Panc1 (cell line): ENCODE measurements at regions of chr12 and their contacts with region 1.

Region 1: GRCh38 chr12:10771132-10771733 is 31.2 kb downstream of the TAS2R7 start:
- DNase-seq: peak; percentile 17
- ATAC-seq: no peak
- H3K4me3 ChIP-seq: no peak overlapping the region
- H3K27ac ChIP-seq: no peak overlapping the region
- H3K4me1 ChIP-seq: no peaks in the 10 kb centered on the region
- H3K27me3 ChIP-seq: peaks cover 18% of the 10 kb centered on the region
- CTCF ChIP-seq: peak; percentile 37; the same call in 1 of the 2 replicates

Region 2: DNA sequence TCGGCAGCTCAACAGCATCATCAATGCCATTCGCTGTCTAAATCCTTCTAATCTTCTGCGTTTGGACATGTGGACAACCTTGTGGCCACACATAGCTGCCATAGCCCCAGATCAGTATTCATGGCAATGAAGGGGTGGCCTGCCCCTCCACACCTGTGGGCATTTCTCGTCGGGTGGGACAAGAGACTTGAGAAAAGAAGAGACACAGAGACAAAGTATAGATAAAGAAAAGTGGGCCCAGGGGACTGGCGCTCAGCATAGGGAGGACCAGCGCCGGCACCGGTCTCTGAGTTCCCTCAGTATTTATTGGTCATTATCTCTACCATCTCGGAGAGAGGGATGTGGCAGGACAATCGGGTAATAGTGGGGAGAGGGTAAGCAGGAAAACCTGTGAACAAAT is 200.1 kb before region 1 on chr12:
- CTCF ChIA-PET with region 1: no interaction called
- POLR2A ChIA-PET with region 1: no interaction called
- in situ Hi-C with region 1: no loop called
- intact Hi-C with region 1: no loop called
- DNase-seq: no peak
- ATAC-seq: no peak
- H3K4me3 ChIP-seq: no peak overlapping the region
- H3K27ac ChIP-seq: no peak overlapping the region
- H3K4me1 ChIP-seq: no peaks in the 10 kb centered on the region
- H3K27me3 ChIP-seq: no peaks in the 10 kb centered on the region
- CTCF ChIP-seq: no peak

Region 3: DNA sequence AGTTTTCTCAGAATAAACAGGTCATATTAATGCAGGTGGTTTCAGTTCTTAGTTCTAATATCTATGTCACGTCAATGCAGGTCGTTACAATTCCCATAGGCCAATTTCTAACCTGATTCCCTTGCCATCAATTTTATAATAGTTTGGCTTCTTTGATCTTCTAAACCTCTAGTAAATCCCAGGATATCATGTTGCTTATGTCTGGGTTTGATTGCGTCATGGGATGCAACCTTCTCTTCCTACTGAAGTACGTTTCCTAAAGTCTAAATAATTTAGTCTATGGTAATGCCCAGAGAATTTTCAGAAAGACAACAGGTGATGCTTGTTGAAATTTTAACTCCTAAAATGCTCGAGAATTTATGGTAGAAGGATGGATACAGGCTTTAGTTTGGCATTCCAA is 12.0 kb after region 1 on chr12:
- CTCF ChIA-PET with region 1: no interaction called
- POLR2A ChIA-PET with region 1: no interaction called
- in situ Hi-C with region 1: no loop called
- intact Hi-C with region 1: no loop called
- DNase-seq: no peak
- ATAC-seq: no peak
- H3K4me3 ChIP-seq: no peak overlapping the region
- H3K27ac ChIP-seq: no peak overlapping the region
- H3K4me1 ChIP-seq: no peaks in the 10 kb centered on the region
- H3K27me3 ChIP-seq: no peaks in the 10 kb centered on the region
- CTCF ChIP-seq: no peak

Region 4: GRCh38 chr12:10873378-10873777 is 102.1 kb after region 1 on chr12:
- CTCF ChIA-PET with region 1: no interaction called
- POLR2A ChIA-PET with region 1: no interaction called
- in situ Hi-C with region 1: no loop called
- intact Hi-C with region 1: no loop called
- DNase-seq: no peak
- ATAC-seq: no peak
- H3K4me3 ChIP-seq: no peak overlapping the region
- H3K27ac ChIP-seq: no peak overlapping the region
- H3K4me1 ChIP-seq: no peaks in the 10 kb centered on the region
- H3K27me3 ChIP-seq: no peaks in the 10 kb centered on the region
- CTCF ChIP-seq: no peak

Region 5: DNA sequence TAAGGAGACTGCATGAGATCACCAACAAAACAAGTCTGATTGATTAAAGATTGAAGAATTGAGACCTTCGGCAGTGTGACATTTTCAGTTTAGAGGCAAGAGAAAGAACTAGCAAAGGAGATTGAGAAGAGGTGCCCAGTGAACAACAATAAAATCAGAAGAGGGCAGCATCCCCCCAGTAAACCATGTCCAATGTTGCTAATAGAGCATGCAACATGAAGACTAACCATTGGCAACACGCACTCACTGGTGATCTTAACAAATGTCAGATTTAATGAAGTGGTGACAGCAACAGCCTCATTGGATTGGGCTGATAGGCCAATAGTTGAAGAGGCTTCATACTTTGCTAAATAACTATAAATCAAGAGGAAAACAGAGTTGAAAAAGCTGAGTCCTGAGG is 188.6 kb after region 1 on chr12:
- CTCF ChIA-PET with region 1: no interaction called
- POLR2A ChIA-PET with region 1: no interaction called
- in situ Hi-C with region 1: no loop called
- intact Hi-C with region 1: no loop called
- DNase-seq: no peak
- ATAC-seq: no peak
- H3K4me3 ChIP-seq: no peak overlapping the region
- H3K27ac ChIP-seq: no peak overlapping the region
- H3K4me1 ChIP-seq: no peaks in the 10 kb centered on the region
- H3K27me3 ChIP-seq: no peaks in the 10 kb centered on the region
- CTCF ChIP-seq: 0 out of 2 replicates have a peak, but pooled peaks have one; percentile 5

Region 6: DNA sequence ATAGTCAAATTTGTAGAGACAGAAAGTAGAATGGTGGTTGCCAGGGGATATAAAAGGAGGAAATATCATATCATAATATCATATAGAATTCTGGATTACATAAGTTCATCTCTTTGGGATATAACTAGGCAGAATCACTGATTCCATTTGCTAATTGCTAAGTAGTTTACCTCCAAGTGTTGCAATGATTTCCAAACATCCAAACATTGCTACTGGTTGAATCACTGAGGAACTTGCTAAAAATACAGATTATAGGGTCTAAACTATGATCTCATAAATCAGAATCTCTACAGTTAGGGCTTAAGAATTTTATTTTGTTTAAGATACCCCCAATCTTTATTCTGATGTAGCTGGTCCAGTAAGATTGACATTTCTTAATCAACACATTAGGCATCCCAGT is 431.6 kb after region 1 on chr12:
- CTCF ChIA-PET with region 1: interaction called, 6 read pairs
- POLR2A ChIA-PET with region 1: no interaction called
- in situ Hi-C with region 1: no loop called
- intact Hi-C with region 1: loop called (anchors 5 kb)
- DNase-seq: no peak
- ATAC-seq: no peak
- H3K4me3 ChIP-seq: no peak overlapping the region
- H3K27ac ChIP-seq: no peak overlapping the region
- H3K4me1 ChIP-seq: no peaks in the 10 kb centered on the region
- H3K27me3 ChIP-seq: no peaks in the 10 kb centered on the region
- CTCF ChIP-seq: no peak

Region 7: GRCh38 chr12:11486623-11487444 is 715.6 kb after region 1 on chr12:
- CTCF ChIA-PET with region 1: interaction called, 6 read pairs
- POLR2A ChIA-PET with region 1: no interaction called
- in situ Hi-C with region 1: no loop called
- intact Hi-C with region 1: loop called (anchors 2 kb)
- DNase-seq: peak; percentile 61
- ATAC-seq: peak; percentile 83
- H3K4me3 ChIP-seq: no peak overlapping the region; a peak in 1 of 4 replicates
- H3K27ac ChIP-seq: no peak overlapping the region
- H3K4me1 ChIP-seq: 0 out of 2 replicates have a peak, but pooled peaks cover 4% of the 10 kb centered on the region
- H3K27me3 ChIP-seq: 0 out of 2 replicates have a peak, but pooled peaks cover 1% of the 10 kb centered on the region
- CTCF ChIP-seq: peak; percentile 91